OCI-LY7 (cell line): ENCODE measurements at regions of chr2 and their contacts with region 1.

Region 1: GRCh38 chr2:69914170-69914960 is 544 bp upstream of the MXD1 start:
- DNase-seq: peak; percentile 100
- H3K4me3 ChIP-seq: peak overlapping the region; percentile 91
- H3K27ac ChIP-seq: peak overlapping the region; percentile 58
- H3K4me1 ChIP-seq: peaks cover 40% of the 10 kb centered on the region
- CTCF ChIP-seq: peak; percentile 50; the same call in 1 of the 2 replicates

Region 2: DNA sequence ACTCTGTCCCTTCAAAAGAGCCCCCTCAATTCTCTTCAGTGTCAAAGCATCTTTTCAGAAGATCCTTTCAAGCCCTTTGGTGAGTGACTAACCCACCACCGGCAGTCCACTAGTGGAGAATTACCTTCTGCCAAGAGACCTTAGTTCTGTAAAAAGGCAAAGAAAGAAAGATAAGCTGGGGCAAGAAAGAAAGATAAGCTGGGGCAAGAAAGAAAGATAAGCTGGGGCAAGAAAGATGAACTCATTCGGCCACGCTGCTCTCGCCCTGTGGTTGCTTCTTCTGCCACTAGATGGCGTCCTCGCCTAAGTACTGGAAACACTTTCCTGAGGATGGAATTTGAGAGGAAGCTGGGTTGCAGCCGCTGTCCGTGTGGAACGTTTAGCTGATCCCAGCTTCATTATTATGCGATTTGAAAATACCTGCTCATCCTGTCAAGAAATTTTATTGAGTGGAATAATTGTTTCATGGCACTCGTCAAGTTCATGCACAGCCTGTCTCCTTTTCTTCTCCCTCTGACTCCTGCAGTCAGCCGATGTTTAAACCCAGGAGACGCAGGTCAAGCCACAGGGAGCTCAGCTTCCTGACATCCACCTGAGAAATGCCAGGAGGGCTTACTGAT is 189.7 kb before region 1 on chr2:
- CTCF ChIA-PET with region 1: interaction called, 6 read pairs
- POLR2A ChIA-PET with region 1: interaction called, 4 read pairs
- intact Hi-C with region 1: loop called (anchors 5 kb)
- DNase-seq: peak; percentile 79
- H3K4me3 ChIP-seq: peak overlapping the region; percentile 54
- H3K27ac ChIP-seq: no peak overlapping the region
- H3K4me1 ChIP-seq: no peaks in the 10 kb centered on the region
- CTCF ChIP-seq: peak; percentile 91

Region 3: GRCh38 chr2:69804416-69804815 is 109.9 kb before region 1 on chr2:
- CTCF ChIA-PET with region 1: no interaction called
- POLR2A ChIA-PET with region 1: no interaction called
- intact Hi-C with region 1: no loop called
- DNase-seq: no peak
- H3K4me3 ChIP-seq: no peak overlapping the region
- H3K27ac ChIP-seq: no peak overlapping the region
- H3K4me1 ChIP-seq: peaks cover 27% of the 10 kb centered on the region
- CTCF ChIP-seq: no peak

Region 4: GRCh38 chr2:70070541-70071268 is 156.3 kb after region 1 on chr2:
- CTCF ChIA-PET with region 1: interaction called, 3 read pairs
- POLR2A ChIA-PET with region 1: interaction called, 7 read pairs
- intact Hi-C with region 1: loop called (anchors 2 kb)
- DNase-seq: peak; percentile 88
- H3K4me3 ChIP-seq: no peak overlapping the region
- H3K27ac ChIP-seq: peak overlapping the region; percentile 69
- H3K4me1 ChIP-seq: peaks cover 40% of the 10 kb centered on the region
- CTCF ChIP-seq: peak; percentile 86

Region 5: DNA sequence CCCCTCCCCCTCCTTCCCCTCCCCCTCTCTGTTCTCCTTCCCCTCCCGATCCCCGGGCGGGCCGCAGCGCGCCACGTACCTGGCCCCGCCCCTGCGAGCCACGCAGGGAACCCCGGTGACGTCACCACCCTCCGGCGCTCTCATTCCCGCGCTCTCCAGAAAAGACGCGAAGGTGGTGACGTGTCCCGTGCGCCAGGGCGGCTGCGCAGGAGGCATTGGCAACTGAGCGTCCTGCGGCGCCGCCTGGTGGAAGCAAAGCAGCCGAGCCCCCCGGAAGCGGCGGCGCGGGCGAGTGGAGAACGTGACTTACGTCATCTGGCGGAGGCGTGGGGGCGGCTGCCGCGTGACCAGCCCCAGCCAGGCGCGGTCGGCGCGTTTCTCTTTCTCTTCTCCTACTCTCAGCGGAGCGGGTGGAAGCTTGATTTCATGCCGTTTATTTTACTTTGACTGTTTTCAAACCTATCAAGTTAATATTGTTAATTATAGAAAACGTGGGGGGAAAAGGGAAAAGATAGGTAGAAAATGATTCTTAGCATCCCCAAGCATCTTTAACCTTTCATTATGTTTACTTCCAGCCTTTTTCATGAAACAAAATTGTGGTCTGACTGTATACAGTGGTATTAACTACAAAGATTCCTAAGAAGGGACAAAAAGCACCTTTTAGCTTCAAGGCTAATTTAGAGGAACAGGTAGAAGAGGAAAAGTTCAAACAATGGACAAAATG is 228.4 kb after region 1 on chr2:
- CTCF ChIA-PET with region 1: no interaction called
- POLR2A ChIA-PET with region 1: interaction called, 11 read pairs
- intact Hi-C with region 1: loop called (anchors 1 kb)
- DNase-seq: peak; percentile 100
- H3K4me3 ChIP-seq: peak overlapping the region; percentile 71
- H3K27ac ChIP-seq: peak overlapping the region; percentile 73
- H3K4me1 ChIP-seq: peaks cover 25% of the 10 kb centered on the region
- CTCF ChIP-seq: peak; percentile 84

Region 6: DNA sequence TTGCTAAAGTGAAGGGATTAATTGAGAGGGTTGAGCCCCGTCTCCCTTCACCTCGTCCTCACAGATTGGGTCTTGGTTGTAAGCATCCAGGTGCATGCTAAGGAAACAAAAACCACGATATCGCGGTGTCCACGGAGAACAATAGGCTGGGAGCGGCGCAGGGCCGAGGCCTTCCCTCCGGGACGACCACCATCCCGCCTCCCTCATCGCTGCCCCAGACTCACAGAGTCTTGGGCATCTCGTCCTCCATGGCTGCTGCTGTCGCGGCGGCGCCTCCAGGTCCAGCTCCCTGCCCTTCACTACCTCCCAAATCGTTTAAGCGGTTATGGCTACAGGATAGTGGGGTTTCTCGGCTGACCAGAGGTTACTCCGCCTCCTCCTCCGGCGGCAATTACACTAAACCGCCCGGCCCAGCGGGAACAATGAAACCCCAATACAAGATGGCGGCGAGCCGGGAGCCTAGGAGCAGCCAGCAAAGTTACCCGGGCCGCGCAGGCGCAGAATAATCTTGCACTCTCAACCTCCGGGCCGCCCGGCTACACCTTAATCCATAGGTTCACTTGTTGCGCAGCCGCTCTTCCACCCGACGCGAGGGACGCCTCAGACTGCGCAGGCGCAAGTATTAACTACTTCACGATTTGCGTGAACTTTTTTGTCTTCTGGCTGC is 333.9 kb after region 1 on chr2 and contains the start of gene TIA1:
- CTCF ChIA-PET with region 1: no interaction called
- POLR2A ChIA-PET with region 1: interaction called, 5 read pairs
- intact Hi-C with region 1: loop called (anchors 5 kb)
- DNase-seq: peak; percentile 100
- H3K4me3 ChIP-seq: peak within 1 kb of the TSS; percentile 86
- H3K27ac ChIP-seq: peak within 1 kb of the TSS; percentile 86
- H3K4me1 ChIP-seq: peaks cover 29% of the 10 kb centered on the region
- CTCF ChIP-seq: no peak
- total RNA-seq, gene TIA1: 129 and 147 TPM in 2 replicates